PC-9 (cell line): ENCODE measurements at regions of chr5 and their contacts with region 1.

Region 1: DNA sequence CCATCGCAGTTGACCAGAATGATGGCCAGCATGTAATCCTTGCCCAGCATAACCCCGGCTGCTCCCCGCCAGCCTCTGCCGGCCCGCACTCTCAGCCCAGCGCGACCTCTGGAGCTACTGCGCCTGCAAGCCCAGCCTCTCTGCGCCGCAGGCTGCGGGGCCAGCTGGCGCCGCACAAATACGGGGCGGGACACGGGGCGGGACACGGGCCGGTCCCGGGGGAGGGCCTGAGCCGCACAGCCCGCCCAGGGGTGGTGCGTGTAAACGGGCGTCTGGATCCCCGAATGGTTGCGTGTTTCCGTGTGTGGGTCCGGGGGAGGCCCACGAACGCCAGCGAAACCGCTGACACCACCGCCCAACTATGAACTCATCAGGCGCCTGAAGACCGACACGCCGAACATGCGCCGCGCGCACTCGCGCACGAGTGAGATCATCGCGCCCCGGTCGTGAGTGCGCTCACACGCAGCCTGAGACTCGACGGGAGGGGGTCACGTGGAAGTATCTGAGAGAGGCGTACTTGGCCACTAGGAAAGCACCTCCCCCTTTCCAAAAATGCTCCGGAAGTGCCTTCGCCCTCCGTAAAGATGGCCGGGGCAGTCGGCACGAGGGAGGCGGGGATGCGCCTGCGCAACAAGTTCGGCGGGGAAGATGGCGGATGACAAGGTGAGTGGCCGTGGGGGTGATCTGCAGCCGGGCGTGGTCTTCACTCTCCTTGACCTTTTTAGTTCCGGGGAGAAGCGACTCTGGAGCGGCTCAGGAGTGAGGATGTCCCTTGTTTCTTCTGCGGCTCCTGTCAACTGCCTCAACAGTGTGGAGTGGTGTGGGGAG is at the starts of genes APBB3 and SLC35A4:
- DNase-seq: peak; percentile 87 to 92
- H3K4me3 ChIP-seq: peak within 1 kb of the TSS; percentile 76
- H3K27ac ChIP-seq: peak within 1 kb of the TSS; percentile 56
- H3K4me1 ChIP-seq: peaks cover 14% of the 10 kb centered on the region
- H3K27me3 ChIP-seq: no peaks in the 10 kb centered on the region
- CTCF ChIP-seq: no peak
- total RNA-seq, gene APBB3: 23.4 and 26.0 TPM in 2 replicates
- total RNA-seq, gene SLC35A4: 44.2 and 66.2 TPM in 2 replicates

Region 2: DNA sequence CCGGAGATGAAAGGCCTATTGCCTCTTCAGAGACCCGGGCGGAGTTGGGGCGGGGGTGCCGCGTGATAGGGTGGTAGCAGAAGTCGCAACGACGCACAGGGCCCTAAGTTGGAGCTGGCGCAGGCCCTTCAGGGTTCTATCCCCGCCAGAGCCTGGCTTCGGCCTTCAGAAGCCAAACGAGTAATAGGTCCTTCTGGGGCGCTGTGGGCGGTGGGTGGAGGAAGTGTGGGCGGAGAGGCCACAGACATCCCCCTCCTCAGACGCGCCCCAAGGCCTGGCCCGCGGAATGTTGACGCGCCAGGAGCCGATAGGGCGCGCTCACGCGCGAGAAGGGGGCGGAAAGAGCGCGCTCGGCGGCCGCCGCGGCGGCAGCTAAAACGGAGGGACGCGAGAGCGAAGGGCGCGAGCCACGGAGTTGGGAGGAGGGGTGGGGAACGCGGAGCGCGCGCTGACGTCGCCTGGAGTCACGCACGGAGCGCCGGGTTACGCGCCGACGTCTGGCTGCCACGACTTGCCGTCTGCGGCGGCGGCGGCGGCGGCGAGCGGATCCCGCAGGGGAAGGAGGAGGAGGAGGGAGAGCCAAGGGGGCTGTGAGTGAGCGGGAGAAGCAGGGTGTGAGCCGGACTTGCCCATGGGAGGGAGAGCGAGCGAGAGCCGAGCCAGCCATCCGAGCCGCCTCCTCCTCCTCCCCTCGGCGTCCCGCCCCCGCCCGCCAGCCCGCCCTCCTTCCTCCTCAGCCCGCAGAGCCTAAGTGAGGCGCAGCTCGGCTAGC is 456.9 kb before region 1 on chr5:
- CTCF ChIA-PET with region 1: no interaction called
- POLR2A ChIA-PET with region 1: no interaction called
- intact Hi-C with region 1: no loop called
- DNase-seq: peak; percentile 81 to 92
- H3K4me3 ChIP-seq: peak overlapping the region; percentile 99
- H3K27ac ChIP-seq: peak overlapping the region; percentile 72
- H3K4me1 ChIP-seq: peaks cover 28% of the 10 kb centered on the region
- H3K27me3 ChIP-seq: no peaks in the 10 kb centered on the region
- CTCF ChIP-seq: peak; percentile 45; the same call in 1 of the 2 replicates

Region 3: GRCh38 chr5:140393738-140394137 is 170.7 kb before region 1 on chr5:
- CTCF ChIA-PET with region 1: no interaction called
- POLR2A ChIA-PET with region 1: interaction called, 34 read pairs
- intact Hi-C with region 1: no loop called
- DNase-seq: no peak
- H3K4me3 ChIP-seq: no peak overlapping the region
- H3K27ac ChIP-seq: no peak overlapping the region
- H3K4me1 ChIP-seq: peaks cover 14% of the 10 kb centered on the region
- H3K27me3 ChIP-seq: no peaks in the 10 kb centered on the region
- CTCF ChIP-seq: no peak

Region 4: GRCh38 chr5:140497897-140498296 is 66.5 kb before region 1 on chr5:
- CTCF ChIA-PET with region 1: no interaction called
- POLR2A ChIA-PET with region 1: no interaction called
- intact Hi-C with region 1: no loop called
- DNase-seq: no peak
- H3K4me3 ChIP-seq: no peak overlapping the region
- H3K27ac ChIP-seq: no peak overlapping the region
- H3K4me1 ChIP-seq: 0 out of 2 replicates have a peak, but pooled peaks cover 3% of the 10 kb centered on the region
- H3K27me3 ChIP-seq: no peaks in the 10 kb centered on the region
- CTCF ChIP-seq: no peak

Region 5: DNA sequence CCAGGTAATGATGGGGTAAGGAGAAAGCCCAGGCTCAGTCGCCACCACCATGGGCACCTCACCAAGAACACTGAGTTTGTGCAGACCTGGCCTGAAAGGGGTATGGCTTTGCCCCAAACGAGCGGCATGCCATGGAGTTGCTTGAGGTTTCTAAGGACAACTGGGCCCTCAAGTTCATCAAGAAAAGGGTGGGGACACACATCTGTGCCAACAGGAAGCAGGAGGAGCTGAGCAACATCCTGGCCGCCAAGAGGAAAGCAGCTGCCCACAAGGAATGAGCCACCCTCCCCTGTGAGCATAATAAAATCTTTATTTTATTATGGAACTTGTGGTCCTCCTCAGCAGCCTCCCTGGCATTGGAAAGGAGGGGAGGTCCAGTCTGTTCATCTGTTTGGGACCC is 44.7 kb after region 1 on chr5:
- CTCF ChIA-PET with region 1: no interaction called
- POLR2A ChIA-PET with region 1: no interaction called
- intact Hi-C with region 1: no loop called
- DNase-seq: no peak
- H3K4me3 ChIP-seq: no peak overlapping the region
- H3K27ac ChIP-seq: no peak overlapping the region
- H3K4me1 ChIP-seq: peaks cover 5% of the 10 kb centered on the region
- H3K27me3 ChIP-seq: no peaks in the 10 kb centered on the region
- CTCF ChIP-seq: no peak